ENCODE measurements at regions of chr10 and their contacts with region 1.

Region 1: DNA sequence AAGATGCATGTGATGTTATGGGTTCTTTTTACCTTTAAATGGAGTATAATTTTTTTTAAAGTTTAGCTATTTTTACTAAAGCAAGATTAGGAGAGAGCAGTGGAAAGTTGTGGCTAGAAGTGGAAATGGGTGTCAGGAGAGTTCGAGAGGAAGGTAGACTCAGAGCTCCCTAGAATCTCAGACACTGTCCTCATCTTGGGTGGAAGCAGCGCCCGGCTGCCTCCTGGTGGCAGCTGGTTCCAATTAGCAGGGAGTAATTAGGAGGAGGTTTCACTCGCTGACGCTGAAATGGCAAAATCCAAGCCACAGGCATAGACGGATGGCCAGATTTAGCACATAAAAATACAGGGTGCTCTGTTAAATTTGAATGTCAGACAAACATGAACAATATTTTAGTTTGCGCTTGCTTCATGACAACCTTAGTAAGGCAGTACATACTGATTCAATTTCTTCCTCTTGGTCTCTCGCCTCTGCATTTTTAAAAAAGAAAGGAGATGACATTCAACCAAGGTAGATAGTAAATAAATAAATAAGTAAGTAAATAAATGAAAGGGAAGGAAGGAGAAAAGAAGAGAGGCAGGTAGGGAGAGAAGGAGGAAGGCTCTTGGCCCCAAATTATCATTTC is 58.5 kb downstream of the LGI1 start:
- DNase-seq: peak in 1 of 2 donors; percentile 83
- H3K4me3 ChIP-seq: peak overlapping the region in 1 of 2 donors; percentile 44
- H3K27ac ChIP-seq: peak overlapping the region in 1 of 2 donors; percentile 20
- H3K4me1 ChIP-seq: no peaks in the 10 kb centered on the region
- H3K27me3 ChIP-seq: no peaks in the 10 kb centered on the region
- CTCF ChIP-seq: peak; percentile 50 to 82 (median 67)

Region 2: DNA sequence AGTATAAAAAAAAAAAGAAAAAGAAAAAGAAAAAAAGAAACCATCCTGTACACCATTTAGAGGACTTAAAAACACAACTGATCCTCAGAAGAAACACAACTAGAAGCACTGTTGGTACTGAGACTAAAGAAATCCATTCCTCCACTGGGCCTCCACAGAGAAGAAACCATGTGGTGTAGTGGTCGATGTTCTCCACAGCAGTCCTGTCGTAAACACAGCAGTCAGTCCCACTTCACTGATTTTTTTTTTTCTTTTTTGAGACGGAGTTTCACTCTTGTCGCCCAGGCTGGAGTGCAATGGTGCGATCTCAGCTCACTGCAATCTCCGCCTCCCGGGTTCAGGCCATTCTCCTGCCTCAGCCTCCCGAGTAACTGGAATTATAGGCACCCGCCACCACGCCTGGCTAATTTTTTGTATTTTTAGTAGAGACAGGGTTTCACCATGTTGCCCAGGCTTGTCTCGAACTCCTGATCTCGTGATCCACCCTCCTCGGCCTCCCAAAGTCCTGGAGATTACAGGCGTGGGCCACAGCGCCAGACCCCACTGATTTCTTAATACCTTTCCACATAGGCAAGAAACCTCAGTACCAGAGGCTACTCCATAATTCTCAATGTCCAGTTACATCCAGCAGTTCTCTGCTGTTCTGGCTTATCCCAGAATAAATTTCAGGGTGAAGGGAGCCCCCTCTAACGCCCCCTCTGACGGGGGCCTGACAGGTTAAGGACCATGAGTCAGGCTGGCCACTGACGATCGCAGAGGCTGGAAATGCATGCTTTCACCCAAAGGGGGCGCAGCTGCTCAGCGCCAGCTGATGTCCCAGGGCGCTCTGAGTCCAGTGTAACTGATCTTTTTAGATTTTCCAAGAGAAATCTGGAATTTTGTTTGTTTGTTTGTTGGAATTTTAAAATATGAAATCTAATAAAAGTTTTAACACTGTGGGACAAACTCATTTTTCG is 274.6 kb before region 1 on chr10:
- intact Hi-C with region 1: loop called (anchors 10 kb)
- DNase-seq: no peak
- H3K4me3 ChIP-seq: peak overlapping the region in 1 of 2 donors; percentile 30
- H3K27ac ChIP-seq: no peak overlapping the region
- H3K4me1 ChIP-seq: no peaks in the 10 kb centered on the region
- H3K27me3 ChIP-seq: no peaks in the 10 kb centered on the region
- CTCF ChIP-seq: peak; percentile 56 to 80 (median 78)

Region 3: DNA sequence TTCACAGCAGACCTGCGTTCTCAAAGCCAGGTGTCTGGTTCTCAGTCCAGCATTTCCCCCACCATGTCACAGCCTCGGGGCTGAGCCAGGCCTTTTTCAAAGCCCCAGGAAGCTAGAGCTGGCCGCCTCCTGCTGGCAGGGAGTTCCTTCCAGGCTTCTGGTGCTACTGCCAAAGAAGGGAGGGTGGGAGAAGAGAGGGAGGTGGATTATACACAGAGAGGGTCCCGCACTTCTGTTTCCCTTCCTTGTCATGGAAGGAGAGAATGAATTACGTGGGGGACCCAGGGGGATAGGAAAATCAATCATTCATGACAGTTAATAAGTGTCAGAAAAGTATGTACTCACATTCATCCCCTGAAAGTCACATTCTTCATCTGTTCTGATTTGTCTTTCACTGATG is 59.1 kb before region 1 on chr10:
- intact Hi-C with region 1: loop called (anchors 2 kb)
- DNase-seq: no peak
- H3K4me3 ChIP-seq: peak overlapping the region in 1 of 2 donors; percentile 65
- H3K27ac ChIP-seq: peak overlapping the region; percentile 44 to 49
- H3K4me1 ChIP-seq: peaks cover 0 to 3% of the 10 kb centered on the region in 2 donors
- H3K27me3 ChIP-seq: no peaks in the 10 kb centered on the region
- CTCF ChIP-seq: peak in 1 of 3 experiments; percentile 33